Activated B cell treated with CpG ODN at 0.5 μM for 24 hours (primary cell): ENCODE measurements at regions of chr7 and their contacts with region 1.

Region 1: GRCh38 chr7:112550468-112551060 is 69.8 kb downstream of the LSMEM1 start:
- DNase-seq: no peak
- ATAC-seq: peak; percentile 49
- H3K4me3 Mint-ChIP-seq: no peak overlapping the region
- H3K27ac Mint-ChIP-seq: no peak overlapping the region
- H3K4me1 Mint-ChIP-seq: no peaks in the 10 kb centered on the region
- H3K27me3 Mint-ChIP-seq: peaks cover 1% of the 10 kb centered on the region
- CTCF ChIP-seq: no peak

Region 2: GRCh38 chr7:112869111-112869757 is 318.7 kb after region 1 on chr7:
- CTCF ChIA-PET with region 1: interaction called, 4 read pairs
- POLR2A ChIA-PET with region 1: no interaction called
- intact Hi-C with region 1: loop called (anchors 1 kb)
- DNase-seq: no peak
- ATAC-seq: peak; percentile 76
- H3K4me3 Mint-ChIP-seq: no peak overlapping the region
- H3K27ac Mint-ChIP-seq: no peak overlapping the region
- H3K4me1 Mint-ChIP-seq: peaks cover 42% of the 10 kb centered on the region
- H3K27me3 Mint-ChIP-seq: no peaks in the 10 kb centered on the region
- CTCF ChIP-seq: peak; percentile 61

Region 3: DNA sequence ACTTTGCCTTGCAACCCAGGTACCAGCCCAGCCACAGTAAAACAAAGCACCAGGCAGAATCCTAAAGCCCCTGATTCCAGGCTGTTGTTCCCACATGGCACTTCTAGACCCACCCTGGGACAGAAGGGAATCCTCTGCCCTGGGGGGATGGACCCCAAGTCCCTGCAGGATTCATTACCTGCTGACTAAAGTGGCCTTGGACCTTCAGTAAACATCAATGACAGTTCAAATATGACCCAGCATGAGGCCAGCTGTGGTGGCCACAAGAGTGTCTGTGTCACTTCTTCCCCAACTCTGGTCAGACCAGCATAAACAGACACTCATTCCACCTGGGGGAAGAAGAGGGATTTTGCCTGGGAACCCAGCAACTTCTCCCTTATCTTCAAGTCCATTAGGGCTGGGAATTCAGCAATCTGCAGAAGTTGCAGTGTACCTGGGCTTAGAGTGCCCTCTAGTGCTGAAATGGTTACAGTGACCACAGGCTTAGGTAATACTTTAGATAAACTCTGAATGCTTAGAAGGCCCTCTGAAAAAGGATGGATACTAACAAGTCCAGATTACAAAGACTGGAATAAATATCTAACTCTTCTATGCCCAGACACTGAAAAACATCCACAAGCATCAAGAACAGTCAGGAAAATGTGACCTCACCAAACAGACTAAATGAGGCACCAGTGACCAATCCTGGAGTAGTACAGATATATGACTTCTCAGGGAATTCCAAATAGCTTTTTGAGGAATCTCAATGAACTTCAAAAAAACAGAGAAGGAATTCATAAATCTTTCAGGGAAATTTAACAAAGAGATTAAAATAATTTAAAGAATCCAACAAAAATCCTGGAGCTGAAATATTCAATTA is 348.1 kb after region 1 on chr7:
- CTCF ChIA-PET with region 1: interaction called, 47 read pairs
- POLR2A ChIA-PET with region 1: no interaction called
- intact Hi-C with region 1: loop called (anchors 1 kb)
- DNase-seq: no peak
- ATAC-seq: peak; percentile 60
- H3K4me3 Mint-ChIP-seq: no peak overlapping the region
- H3K27ac Mint-ChIP-seq: no peak overlapping the region
- H3K4me1 Mint-ChIP-seq: peaks cover 3% of the 10 kb centered on the region
- H3K27me3 Mint-ChIP-seq: no peaks in the 10 kb centered on the region
- CTCF ChIP-seq: peak; percentile 45

Region 4: GRCh38 chr7:113118074-113118959 is 567.8 kb after region 1 on chr7 and contains the start of gene SMIM30:
- CTCF ChIA-PET with region 1: no interaction called
- POLR2A ChIA-PET with region 1: no interaction called
- intact Hi-C with region 1: loop called (anchors 2 kb)
- DNase-seq: peak; percentile 77
- ATAC-seq: peak; percentile 100
- H3K4me3 Mint-ChIP-seq: peak within 1 kb of the TSS; percentile 93
- H3K27ac Mint-ChIP-seq: peak within 1 kb of the TSS; percentile 97
- H3K4me1 Mint-ChIP-seq: peaks cover 23% of the 10 kb centered on the region
- H3K27me3 Mint-ChIP-seq: no peaks in the 10 kb centered on the region
- CTCF ChIP-seq: no peak
- total RNA-seq, gene SMIM30: 28.7 and 30.6 TPM in 2 replicates

Region 5: DNA sequence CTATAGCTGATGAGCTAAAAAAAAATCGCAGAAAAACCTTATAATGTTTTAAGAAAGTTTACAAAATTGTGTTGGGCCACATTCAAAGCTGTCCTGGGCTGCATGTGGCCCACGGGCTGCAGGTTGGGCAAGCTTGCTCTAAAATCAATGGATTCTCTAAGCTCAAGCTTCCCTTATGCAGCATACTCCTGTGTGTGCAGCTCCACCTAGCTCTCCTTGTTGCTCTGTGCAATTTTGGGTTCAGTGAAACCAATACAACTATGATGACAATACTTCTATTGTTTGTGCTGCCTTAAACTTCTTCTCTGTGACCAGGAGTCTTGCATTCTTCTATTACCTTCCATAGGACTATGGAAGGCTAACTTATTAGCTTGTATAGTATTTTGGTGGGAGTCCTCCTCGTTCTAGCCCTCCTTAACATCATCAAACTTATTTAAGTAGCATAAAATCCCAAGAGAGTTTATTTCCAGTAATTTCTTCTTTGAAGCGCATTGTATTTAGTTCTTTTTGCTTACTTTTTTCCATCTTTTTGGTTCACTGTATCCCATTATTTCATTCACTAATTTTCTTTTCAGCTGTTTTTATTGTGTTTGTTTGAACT is 738.7 kb after region 1 on chr7:
- CTCF ChIA-PET with region 1: no interaction called
- POLR2A ChIA-PET with region 1: no interaction called
- intact Hi-C with region 1: loop called (anchors 1 kb)
- DNase-seq: no peak
- ATAC-seq: no peak
- H3K4me3 Mint-ChIP-seq: no peak overlapping the region
- H3K27ac Mint-ChIP-seq: no peak overlapping the region
- H3K4me1 Mint-ChIP-seq: no peaks in the 10 kb centered on the region
- H3K27me3 Mint-ChIP-seq: no peaks in the 10 kb centered on the region
- CTCF ChIP-seq: no peak

Region 6: DNA sequence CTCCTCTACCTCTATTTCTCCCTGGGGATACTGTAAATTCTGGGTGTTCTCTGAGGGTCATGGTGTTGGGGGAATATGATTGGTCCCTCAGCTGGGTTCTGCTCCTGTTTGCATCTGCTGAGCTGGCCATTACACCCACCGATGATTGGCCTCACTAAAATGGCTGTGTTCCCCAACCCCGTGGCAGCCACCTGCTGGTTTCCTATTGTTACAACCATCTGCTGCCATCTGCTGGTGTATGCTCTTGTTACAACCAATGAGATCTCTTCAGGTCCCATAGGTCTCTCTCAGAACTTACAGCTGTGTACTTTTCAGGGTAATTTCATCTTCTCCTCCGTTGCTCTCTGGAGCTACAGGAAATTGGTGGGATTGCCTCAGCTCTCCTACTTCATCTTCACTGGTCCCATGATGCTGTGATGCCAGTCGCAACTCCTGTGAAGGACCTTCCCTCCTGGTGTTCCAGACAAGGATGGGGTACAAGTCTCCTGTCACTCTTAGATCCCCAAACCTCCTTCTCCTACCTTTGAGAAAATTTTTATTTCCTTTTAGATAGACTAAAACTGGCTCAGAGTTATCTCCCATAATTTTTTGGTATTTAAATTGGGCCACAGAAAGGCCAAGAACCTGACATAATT is 871.2 kb after region 1 on chr7:
- CTCF ChIA-PET with region 1: interaction called, 81 read pairs
- POLR2A ChIA-PET with region 1: no interaction called
- intact Hi-C with region 1: loop called (anchors 1 kb)
- DNase-seq: peak; percentile 32
- ATAC-seq: peak; percentile 99
- H3K4me3 Mint-ChIP-seq: no peak overlapping the region
- H3K27ac Mint-ChIP-seq: no peak overlapping the region
- H3K4me1 Mint-ChIP-seq: peaks cover 3% of the 10 kb centered on the region
- H3K27me3 Mint-ChIP-seq: no peaks in the 10 kb centered on the region
- CTCF ChIP-seq: no peak

Region 7: GRCh38 chr7:113698556-113699220 is 1148.1 kb after region 1 on chr7:
- CTCF ChIA-PET with region 1: no interaction called
- POLR2A ChIA-PET with region 1: no interaction called
- intact Hi-C with region 1: loop called (anchors 2 kb)
- DNase-seq: no peak
- ATAC-seq: no peak
- H3K4me3 Mint-ChIP-seq: no peak overlapping the region
- H3K27ac Mint-ChIP-seq: no peak overlapping the region
- H3K4me1 Mint-ChIP-seq: no peaks in the 10 kb centered on the region
- H3K27me3 Mint-ChIP-seq: no peaks in the 10 kb centered on the region
- CTCF ChIP-seq: no peak